Endothelial cell of umbilical vein (primary cell): ENCODE measurements at regions of chr19 and their contacts with region 1.

Region 1: GRCh38 chr19:41872775-41873647 is 4.1 kb upstream of the CD79A start:
- DNase-seq: peak; percentile 65
- H3K4me3 ChIP-seq: no peak overlapping the region
- H3K27ac ChIP-seq: no peak overlapping the region
- H3K4me1 ChIP-seq: no peaks in the 10 kb centered on the region
- H3K27me3 ChIP-seq: no peaks in the 10 kb centered on the region
- CTCF ChIP-seq: peak; percentile 65 to 85
- POLR2A ChIP-seq: peak; percentile 34

Region 2: DNA sequence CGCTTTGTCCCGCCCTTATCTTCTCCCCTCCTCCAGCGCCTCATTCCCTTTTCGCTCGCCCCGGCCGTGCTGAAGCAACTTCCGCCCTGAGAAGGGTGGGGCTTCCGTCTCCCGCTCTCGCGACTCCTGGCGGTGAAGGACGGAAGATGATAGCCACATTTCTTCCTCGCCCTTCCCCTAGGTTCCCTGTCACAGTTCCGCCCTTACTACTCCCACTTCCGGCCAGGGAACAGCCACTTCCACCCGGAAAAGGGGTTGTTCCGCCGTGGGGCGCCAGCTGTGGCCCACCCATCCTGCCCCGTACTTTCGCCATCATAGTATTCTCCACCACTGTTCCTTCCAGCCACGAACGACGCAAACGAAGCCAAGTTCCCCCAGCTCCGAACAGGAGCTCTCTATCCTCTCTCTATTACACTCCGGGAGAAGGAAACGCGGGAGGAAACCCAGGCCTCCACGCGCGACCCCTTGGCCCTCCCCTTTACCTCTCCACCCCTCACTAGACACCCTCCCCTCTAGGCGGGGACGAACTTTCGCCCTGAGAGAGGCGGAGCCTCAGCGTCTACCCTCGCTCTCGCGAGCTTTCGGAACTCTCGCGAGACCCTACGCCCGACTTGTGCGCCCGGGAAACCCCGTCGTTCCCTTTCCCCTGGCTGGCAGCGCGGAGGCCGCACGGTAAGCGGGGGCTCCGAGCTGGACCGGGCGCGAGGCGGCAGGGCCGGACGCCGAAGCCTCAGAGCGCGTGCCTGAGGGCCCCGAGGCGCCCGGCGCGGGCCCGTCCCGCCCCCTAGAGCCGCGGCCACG is 13.2 kb before region 1 on chr19 and contains the start of gene RPS19:
- CTCF ChIA-PET with region 1: interaction called, 18 read pairs
- POLR2A ChIA-PET with region 1: interaction called, 7 read pairs
- dilution Hi-C with region 1: no loop called
- intact Hi-C with region 1: no loop called
- DNase-seq: peak; percentile 99
- H3K4me3 ChIP-seq: peak within 1 kb of the TSS; percentile 78 to 86 (median 85)
- H3K27ac ChIP-seq: peak within 1 kb of the TSS; percentile 93
- H3K4me1 ChIP-seq: peaks cover 39% of the 10 kb centered on the region
- H3K27me3 ChIP-seq: no peaks in the 10 kb centered on the region
- CTCF ChIP-seq: peak; percentile 43 to 65
- POLR2A ChIP-seq: peak; percentile 86
- total RNA-seq, gene RPS19: 2,195 and 2,234 TPM in 2 replicates

Region 3: GRCh38 chr19:41912899-41913537 is 40.0 kb after region 1 on chr19:
- CTCF ChIA-PET with region 1: no interaction called
- POLR2A ChIA-PET with region 1: no interaction called
- dilution Hi-C with region 1: no loop called
- intact Hi-C with region 1: no loop called
- DNase-seq: no peak
- H3K4me3 ChIP-seq: no peak overlapping the region
- H3K27ac ChIP-seq: no peak overlapping the region
- H3K4me1 ChIP-seq: no peaks in the 10 kb centered on the region
- H3K27me3 ChIP-seq: peaks cover 47 to 59% of the 10 kb centered on the region in 2 experiments
- CTCF ChIP-seq: no peak
- POLR2A ChIP-seq: no peak

Region 4: GRCh38 chr19:41934849-41935374 is 61.9 kb after region 1 on chr19:
- CTCF ChIA-PET with region 1: interaction called, 20 read pairs
- POLR2A ChIA-PET with region 1: interaction called, 3 read pairs
- dilution Hi-C with region 1: no loop called
- intact Hi-C with region 1: loop called (anchors 1 kb)
- DNase-seq: peak; percentile 45
- H3K4me3 ChIP-seq: no peak overlapping the region
- H3K27ac ChIP-seq: no peak overlapping the region
- H3K4me1 ChIP-seq: no peaks in the 10 kb centered on the region
- H3K27me3 ChIP-seq: peaks cover 55 to 63% of the 10 kb centered on the region in 2 experiments
- CTCF ChIP-seq: peak; percentile 86 to 88
- POLR2A ChIP-seq: no peak

Region 5: DNA sequence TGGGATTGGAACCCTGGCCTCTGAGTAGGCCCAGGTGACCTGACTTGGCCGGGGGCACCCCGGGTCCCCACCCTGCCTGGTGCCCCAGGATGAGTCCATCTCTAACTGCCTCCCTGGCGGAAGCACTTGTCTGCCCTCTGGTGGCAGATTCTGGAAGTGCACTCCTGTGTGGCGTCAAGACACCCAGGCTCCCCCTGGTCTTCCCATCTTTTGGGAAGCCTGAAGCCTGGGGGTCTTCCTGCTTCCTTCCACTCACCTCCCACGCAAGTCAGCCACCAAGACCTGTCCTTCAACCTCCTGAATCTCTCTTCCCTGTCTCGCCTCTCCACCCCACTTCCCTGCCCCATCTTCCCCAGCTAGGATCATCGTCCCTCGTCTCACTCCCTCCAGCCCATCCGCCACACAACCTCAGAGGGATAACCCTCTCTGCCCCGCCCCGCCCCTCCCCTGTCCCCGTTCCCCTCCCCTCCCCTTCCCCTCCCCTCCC is 78.7 kb after region 1 on chr19:
- CTCF ChIA-PET with region 1: interaction called, 35 read pairs
- POLR2A ChIA-PET with region 1: interaction called, 3 read pairs
- dilution Hi-C with region 1: no loop called
- intact Hi-C with region 1: loop called (anchors 1 kb)
- DNase-seq: peak; percentile 56
- H3K4me3 ChIP-seq: no peak overlapping the region
- H3K27ac ChIP-seq: no peak overlapping the region
- H3K4me1 ChIP-seq: no peaks in the 10 kb centered on the region
- H3K27me3 ChIP-seq: no peaks in the 10 kb centered on the region
- CTCF ChIP-seq: peak; percentile 92 to 99
- POLR2A ChIP-seq: no peak